MCF 10A (cell line): ENCODE measurements at regions of chr6 and their contacts with region 1.

Region 1: GRCh38 chr6:30483677-30484279 is 5.5 kb upstream of the HLA-E start:
- DNase-seq: peak; percentile 75
- H3K4me3 Mint-ChIP-seq: no peak overlapping the region
- H3K27ac Mint-ChIP-seq: no peak overlapping the region
- H3K4me1 Mint-ChIP-seq: peaks cover 3% of the 10 kb centered on the region
- H3K27me3 Mint-ChIP-seq: peaks cover 43% of the 10 kb centered on the region
- CTCF ChIP-seq: peak; percentile 70

Region 2: DNA sequence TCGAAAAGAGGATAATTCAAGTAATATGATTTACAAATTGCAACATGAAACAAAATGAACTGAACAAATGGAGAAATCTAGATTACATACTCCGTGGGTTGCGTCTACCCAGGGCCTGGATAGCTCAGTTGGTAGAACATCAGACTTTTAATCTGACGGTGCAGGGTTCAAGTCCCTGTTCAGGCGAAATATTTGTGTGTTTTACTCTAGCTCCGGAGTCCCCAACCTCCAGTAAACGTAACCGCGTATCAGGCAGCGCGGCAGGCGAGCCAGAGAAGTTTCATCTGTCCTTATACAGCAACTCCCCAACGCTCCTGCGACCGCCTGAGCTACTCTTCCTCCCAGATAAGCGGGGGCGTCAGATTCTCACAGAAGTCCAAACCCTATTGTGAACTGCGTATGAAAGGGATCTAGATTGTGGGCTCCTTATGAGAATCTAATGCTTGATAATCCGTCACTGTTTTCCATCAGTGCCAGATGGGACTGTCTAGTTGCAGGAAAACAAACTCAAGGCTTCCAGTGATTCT is 1736.1 kb before region 1 on chr6:
- CTCF ChIA-PET with region 1: no interaction called
- POLR2A ChIA-PET with region 1: no interaction called
- intact Hi-C with region 1: no loop called
- DNase-seq: peak; percentile 86
- H3K4me3 Mint-ChIP-seq: peak overlapping the region; percentile 76
- H3K27ac Mint-ChIP-seq: peak overlapping the region; percentile 81
- H3K4me1 Mint-ChIP-seq: no peaks in the 10 kb centered on the region
- H3K27me3 Mint-ChIP-seq: no peaks in the 10 kb centered on the region
- CTCF ChIP-seq: no peak

Region 3: DNA sequence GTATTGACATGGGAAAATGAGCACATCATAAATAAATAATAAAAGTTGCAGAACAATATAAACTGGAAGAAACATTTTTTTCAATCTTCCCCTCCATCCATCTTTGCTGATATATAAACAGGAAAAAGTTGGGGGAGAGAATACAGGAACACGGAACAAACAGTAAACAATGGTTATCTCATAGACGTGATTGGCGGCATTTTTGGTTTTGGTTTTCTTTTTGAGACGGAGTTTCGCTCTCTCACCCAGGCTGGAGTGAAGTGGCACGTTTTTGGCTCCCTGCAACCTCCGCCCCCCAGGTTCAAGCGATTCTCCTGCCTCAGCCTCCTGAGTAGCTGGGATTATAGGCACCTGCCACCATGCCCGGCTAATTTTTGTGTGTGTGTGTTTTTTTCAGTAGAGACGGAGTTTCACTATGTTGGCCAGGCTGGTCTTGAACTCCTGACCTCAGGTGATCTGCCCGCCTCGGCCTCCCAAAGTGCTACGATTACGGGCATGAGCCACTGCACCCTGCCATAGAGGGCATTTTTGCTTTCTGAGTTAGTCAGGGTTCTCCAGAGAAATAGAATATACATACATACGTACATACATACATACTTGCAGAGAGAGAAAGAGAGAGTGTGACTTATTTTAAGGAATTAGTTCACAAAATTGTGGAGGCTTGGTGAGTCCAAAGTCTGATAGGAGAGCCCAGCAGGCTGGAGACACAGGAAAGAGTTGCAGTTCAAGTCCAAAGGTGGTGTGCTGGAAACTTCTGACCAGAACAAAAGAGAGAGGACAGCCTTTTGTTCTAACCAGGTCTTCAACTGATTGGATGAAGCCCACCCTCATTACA is 49.9 kb after region 1 on chr6:
- CTCF ChIA-PET with region 1: interaction called, 115 read pairs
- POLR2A ChIA-PET with region 1: interaction called, 15 read pairs
- intact Hi-C with region 1: loop called (anchors 1 kb)
- DNase-seq: no peak
- H3K4me3 Mint-ChIP-seq: no peak overlapping the region
- H3K27ac Mint-ChIP-seq: no peak overlapping the region
- H3K4me1 Mint-ChIP-seq: no peaks in the 10 kb centered on the region
- H3K27me3 Mint-ChIP-seq: no peaks in the 10 kb centered on the region
- CTCF ChIP-seq: no peak

Region 4: GRCh38 chr6:30556066-30556905 is 72.5 kb after region 1 on chr6 and contains the start of gene GNL1:
- CTCF ChIA-PET with region 1: interaction called, 17 read pairs
- POLR2A ChIA-PET with region 1: interaction called, 4 read pairs
- intact Hi-C with region 1: no loop called
- DNase-seq: peak; percentile 94
- H3K4me3 Mint-ChIP-seq: peak within 1 kb of the TSS; percentile 91
- H3K27ac Mint-ChIP-seq: peak within 1 kb of the TSS; percentile 99
- H3K4me1 Mint-ChIP-seq: peaks cover 16% of the 10 kb centered on the region
- H3K27me3 Mint-ChIP-seq: no peaks in the 10 kb centered on the region
- CTCF ChIP-seq: no peak
- total RNA-seq, gene GNL1: 69.1 and 76.8 TPM in 2 replicates

Region 5: GRCh38 chr6:30678964-30679726 is 195.4 kb after region 1 on chr6:
- CTCF ChIA-PET with region 1: no interaction called
- POLR2A ChIA-PET with region 1: no interaction called
- intact Hi-C with region 1: no loop called
- DNase-seq: peak; percentile 82
- H3K4me3 Mint-ChIP-seq: peak overlapping the region; percentile 41
- H3K27ac Mint-ChIP-seq: no peak overlapping the region
- H3K4me1 Mint-ChIP-seq: peaks cover 28% of the 10 kb centered on the region
- H3K27me3 Mint-ChIP-seq: no peaks in the 10 kb centered on the region
- CTCF ChIP-seq: peak; percentile 98

Region 6: DNA sequence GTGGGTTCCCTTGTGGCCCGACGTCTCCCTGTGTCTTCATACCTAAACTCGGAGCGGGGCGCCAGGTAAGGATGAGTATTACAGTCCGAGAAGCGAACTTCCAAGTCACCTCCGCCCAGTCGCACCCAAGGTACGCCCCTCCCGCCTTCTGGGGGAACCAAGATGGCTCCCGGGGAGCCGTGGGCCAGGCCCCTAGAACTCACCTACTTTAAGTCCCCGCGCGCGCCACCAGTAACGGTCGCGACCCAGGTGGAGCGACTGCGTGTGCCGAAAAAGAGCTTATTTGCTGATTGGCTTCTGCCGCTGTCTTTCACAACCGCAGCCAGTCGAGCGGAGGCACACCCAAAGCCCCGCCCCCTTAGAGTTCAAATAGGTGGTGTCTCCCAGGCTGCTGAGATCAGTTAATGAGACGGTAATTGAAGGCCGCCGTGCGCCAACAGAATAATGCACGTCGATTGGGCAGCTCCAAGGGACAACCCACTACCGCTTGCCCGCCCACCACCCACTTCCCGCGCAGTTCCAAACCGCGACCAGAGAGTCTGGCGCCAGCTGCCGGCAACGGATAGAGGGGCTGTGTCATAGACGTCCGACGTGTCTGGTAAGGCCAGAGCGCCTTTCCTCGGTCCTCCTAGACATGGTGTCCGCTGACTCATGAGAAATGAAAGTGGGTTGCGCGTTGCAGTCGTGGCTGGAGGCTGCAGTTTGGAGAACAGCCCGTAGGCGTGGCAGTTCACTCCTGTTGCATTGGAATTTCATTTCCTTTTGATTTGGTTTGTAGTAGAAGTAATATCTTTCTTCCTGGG is 233.5 kb after region 1 on chr6 and contains the start of gene MDC1:
- CTCF ChIA-PET with region 1: no interaction called
- POLR2A ChIA-PET with region 1: no interaction called
- intact Hi-C with region 1: loop called (anchors 5 kb)
- DNase-seq: peak; percentile 100
- H3K4me3 Mint-ChIP-seq: peak within 1 kb of the TSS; percentile 88
- H3K27ac Mint-ChIP-seq: peak within 1 kb of the TSS; percentile 94
- H3K4me1 Mint-ChIP-seq: peaks cover 38% of the 10 kb centered on the region
- H3K27me3 Mint-ChIP-seq: no peaks in the 10 kb centered on the region
- CTCF ChIP-seq: no peak
- total RNA-seq, gene MDC1: 50.6 and 54.5 TPM in 2 replicates

Region 7: DNA sequence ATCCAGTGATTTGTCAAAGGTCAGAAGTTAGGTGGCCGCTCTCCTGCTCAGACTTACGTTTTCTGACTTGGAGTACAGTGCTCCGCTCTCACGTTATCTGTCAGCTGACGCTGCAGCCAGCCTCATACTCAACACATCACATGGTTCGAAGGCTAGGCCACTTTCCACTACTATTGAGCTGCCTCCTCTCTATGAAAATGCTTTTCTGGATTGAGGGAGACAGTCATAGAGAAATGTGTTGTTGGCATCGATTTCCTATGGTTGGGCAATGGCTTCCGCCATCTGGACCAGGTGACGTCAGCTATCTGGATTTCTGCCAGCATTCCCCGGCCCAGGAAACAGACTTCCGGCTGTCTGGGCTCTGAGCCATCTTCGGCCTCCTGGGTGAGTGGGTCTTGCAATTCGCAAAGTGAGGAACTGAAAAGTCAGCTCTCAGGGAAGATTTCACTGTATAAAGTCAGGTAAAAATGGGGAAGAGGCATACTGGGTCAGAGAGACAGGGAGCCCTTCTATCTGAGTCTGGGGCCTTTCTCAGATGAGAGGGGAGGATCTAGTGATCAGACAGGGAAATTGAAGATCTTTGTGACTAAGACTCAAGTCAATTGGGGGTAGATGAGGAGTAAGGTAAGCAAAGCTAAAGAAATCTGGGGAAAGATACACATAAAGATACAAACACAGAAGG is 298.1 kb after region 1 on chr6:
- CTCF ChIA-PET with region 1: no interaction called
- POLR2A ChIA-PET with region 1: no interaction called
- intact Hi-C with region 1: no loop called
- DNase-seq: peak; percentile 98
- H3K4me3 Mint-ChIP-seq: peak overlapping the region; percentile 42
- H3K27ac Mint-ChIP-seq: peak overlapping the region; percentile 91
- H3K4me1 Mint-ChIP-seq: peaks cover 57% of the 10 kb centered on the region
- H3K27me3 Mint-ChIP-seq: no peaks in the 10 kb centered on the region
- CTCF ChIP-seq: no peak

Region 8: DNA sequence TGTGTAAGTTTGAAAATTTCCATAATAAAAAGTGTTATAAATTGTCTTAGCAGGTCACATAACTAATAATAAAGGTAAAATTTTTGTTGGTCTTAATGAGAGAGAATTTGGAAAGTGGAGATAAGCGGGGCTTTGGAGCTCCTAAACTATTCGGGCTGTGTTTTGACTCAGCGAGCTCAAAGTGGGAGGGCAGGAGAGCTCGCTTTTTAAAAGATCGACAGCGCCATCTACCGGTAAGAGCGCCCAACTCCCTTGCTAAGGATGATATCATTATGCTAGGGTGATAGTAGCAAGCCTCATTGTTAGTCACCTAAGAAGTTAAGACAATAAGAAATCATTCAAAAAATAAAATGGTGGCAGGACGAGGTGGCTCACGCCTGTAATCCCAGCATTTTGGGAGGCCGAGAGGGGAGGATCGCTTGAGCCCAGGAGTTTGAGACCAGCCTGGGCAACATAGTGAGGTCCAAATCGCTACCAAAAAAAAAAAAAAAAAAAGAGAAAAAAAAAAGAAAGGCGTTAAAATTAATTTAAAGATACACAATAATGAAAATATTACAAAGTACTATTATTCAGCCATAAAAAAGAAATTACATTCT is 603.8 kb after region 1 on chr6:
- CTCF ChIA-PET with region 1: no interaction called
- POLR2A ChIA-PET with region 1: no interaction called
- intact Hi-C with region 1: loop called (anchors 5 kb)
- DNase-seq: peak; percentile 91
- H3K4me3 Mint-ChIP-seq: no peak overlapping the region
- H3K27ac Mint-ChIP-seq: peak overlapping the region; percentile 16
- H3K4me1 Mint-ChIP-seq: peaks cover 21% of the 10 kb centered on the region
- H3K27me3 Mint-ChIP-seq: no peaks in the 10 kb centered on the region
- CTCF ChIP-seq: peak; percentile 65